PC-3 (cell line): ENCODE measurements at regions of chr12 and their contacts with region 1.

Region 1: GRCh38 chr12:56189176-56189917 is at the start of gene SMARCC2:
- DNase-seq: peak; percentile 93
- ATAC-seq: peak; percentile 86
- H3K4me3 ChIP-seq: peak within 1 kb of the TSS; percentile 94
- H3K27ac ChIP-seq: peak within 1 kb of the TSS; percentile 41
- H3K4me1 ChIP-seq: peaks cover 21% of the 10 kb centered on the region
- H3K27me3 ChIP-seq: no peaks in the 10 kb centered on the region
- CTCF ChIP-seq: peak; percentile 65
- total RNA-seq, gene SMARCC2: 38.4 and 39.4 TPM in 2 replicates

Region 2: DNA sequence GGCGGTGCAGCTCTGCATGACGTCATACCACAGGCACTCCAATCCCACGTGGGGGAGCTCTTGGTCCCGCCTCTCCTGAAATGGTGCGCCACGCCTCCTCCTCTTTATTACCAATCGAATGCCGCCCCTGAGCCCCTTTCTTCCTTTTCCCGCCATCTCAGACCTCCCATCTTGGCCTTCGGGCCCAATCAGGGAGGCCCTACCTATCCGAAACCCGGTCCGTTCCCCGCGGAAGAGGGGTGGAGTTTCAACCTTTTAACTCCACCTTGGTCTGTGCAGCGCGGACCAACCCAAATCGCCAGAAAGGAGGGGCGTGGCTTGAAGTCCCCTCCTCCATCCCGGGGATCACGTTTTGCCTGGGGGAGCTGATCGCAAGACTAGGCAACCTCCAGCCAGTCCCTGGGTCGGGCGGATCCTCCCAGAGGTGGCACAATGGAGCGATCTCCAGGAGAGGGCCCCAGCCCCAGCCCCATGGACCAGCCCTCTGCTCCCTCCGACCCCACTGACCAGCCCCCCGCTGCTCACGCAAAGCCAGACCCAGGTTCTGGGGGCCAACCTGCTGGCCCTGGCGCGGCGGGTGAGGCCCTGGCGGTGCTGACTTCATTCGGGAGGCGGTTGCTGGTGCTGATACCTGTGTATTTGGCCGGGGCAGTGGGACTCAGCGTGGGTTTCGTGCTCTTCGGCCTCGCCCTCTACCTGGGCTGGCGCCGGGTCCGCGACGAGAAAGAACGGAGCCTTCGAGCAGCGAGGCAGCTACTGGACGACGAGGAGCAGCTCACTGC is 61.3 kb before region 1 on chr12 and contains the start of gene ESYT1:
- CTCF ChIA-PET with region 1: interaction called, 17 read pairs
- POLR2A ChIA-PET with region 1: interaction called, 4 read pairs
- intact Hi-C with region 1: loop called (anchors 2 kb)
- DNase-seq: peak; percentile 100
- ATAC-seq: peak; percentile 90
- H3K4me3 ChIP-seq: peak within 1 kb of the TSS; percentile 96
- H3K27ac ChIP-seq: peak within 1 kb of the TSS; percentile 39; the same call in 1 of the 2 replicates
- H3K4me1 ChIP-seq: peaks cover 33% of the 10 kb centered on the region
- H3K27me3 ChIP-seq: no peaks in the 10 kb centered on the region
- CTCF ChIP-seq: no peak
- total RNA-seq, gene ESYT1: 120 and 176 TPM in 2 replicates

Region 3: DNA sequence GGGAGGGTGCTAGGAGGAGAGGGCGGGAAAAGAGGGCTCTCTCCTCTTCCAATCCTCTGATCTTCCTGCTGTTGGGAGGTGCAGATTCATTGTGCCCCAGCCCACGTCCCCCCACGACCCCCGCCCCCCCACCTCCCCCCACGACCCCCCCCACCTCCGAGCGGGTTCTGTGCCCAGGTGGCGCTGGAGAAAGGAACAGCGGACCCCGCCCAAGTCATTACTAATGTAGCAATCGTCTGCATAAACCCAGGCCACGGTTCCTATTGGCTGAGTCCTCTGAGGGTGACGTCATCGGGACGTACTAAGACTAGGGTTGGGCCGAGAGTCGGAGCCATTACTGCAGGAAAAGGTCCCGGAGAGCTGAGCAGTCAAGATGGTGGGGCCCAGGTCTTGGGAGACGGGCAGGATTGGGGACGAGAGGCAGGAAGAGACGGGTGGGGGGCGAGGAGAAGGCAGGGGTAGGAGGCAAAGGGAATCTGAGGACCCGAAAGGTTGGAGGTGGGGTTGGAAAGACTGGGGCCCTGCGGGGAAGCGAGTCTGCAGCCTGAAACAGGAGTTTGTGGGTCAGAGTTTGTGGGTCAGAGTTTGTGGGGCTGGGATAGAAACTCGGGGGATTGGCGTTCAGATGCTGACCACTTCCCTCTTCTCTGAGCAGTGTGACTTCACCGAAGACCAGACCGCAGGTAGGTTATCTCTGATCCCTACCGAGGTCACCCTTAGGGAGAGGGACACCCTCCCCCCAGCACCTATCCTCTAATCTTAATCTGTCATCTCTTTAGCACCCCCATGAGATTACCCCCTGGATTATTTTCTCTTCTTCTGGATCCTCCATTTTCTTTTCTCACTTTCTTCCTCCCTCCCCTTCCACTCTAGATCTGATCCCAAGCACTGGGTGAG is 31.1 kb before region 1 on chr12 and contains the start of gene MYL6:
- CTCF ChIA-PET with region 1: interaction called, 3 read pairs
- POLR2A ChIA-PET with region 1: interaction called, 6 read pairs
- intact Hi-C with region 1: loop called (anchors 2 kb)
- DNase-seq: peak; percentile 99
- ATAC-seq: peak; percentile 76
- H3K4me3 ChIP-seq: peak within 1 kb of the TSS; percentile 76
- H3K27ac ChIP-seq: peak within 1 kb of the TSS; percentile 73
- H3K4me1 ChIP-seq: peaks cover 28% of the 10 kb centered on the region
- H3K27me3 ChIP-seq: no peaks in the 10 kb centered on the region
- CTCF ChIP-seq: no peak
- total RNA-seq, gene MYL6: 1,385 and 1,597 TPM in 2 replicates

Region 4: DNA sequence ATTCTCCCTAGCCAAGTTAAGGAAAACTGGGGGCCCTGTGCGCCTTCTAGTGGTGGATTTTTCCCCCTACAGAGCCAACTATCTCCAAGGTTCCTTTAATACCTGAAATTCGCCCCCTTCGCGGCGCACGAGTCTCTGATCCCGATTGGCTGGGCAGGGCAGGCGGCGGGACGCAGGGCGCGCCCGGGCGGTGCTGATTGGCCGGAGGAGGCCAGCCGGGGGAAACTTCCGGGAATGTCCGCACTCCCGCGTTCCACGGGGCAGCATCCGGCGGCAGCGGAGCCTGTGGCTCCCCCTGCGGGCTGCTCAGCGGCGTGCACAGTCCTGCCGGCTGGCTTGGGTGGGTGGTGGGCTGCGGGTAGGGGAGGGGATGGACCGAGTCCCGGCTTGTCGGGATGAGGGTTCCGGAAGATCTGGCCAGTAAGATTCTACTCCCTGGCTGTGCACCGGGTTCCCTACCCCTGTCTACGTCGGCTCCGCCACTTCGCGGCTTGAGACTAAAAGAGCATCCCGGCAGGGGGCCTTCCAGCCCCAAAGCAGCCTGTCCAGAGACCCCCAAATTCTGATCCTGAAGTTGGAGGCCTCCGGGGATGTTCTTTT is 34.9 kb after region 1 on chr12 and contains the start of gene NABP2:
- CTCF ChIA-PET with region 1: interaction called, 9 read pairs
- POLR2A ChIA-PET with region 1: interaction called, 18 read pairs
- intact Hi-C with region 1: loop called (anchors 1 kb)
- DNase-seq: peak; percentile 99
- ATAC-seq: peak; percentile 81
- H3K4me3 ChIP-seq: peak within 1 kb of the TSS; percentile 88
- H3K27ac ChIP-seq: peak within 1 kb of the TSS; percentile 21; the same call in 1 of the 2 replicates
- H3K4me1 ChIP-seq: peaks cover 22% of the 10 kb centered on the region
- H3K27me3 ChIP-seq: no peaks in the 10 kb centered on the region
- CTCF ChIP-seq: peak; percentile 94
- total RNA-seq, gene NABP2: 91.6 and 98.6 TPM in 2 replicates

Region 5: GRCh38 chr12:56468216-56469006 is 279.1 kb after region 1 on chr12 and contains the start of gene SPRYD4:
- CTCF ChIA-PET with region 1: no interaction called
- POLR2A ChIA-PET with region 1: no interaction called
- intact Hi-C with region 1: loop called (anchors 10 kb)
- DNase-seq: peak; percentile 94
- ATAC-seq: peak; percentile 87
- H3K4me3 ChIP-seq: peak within 1 kb of the TSS; percentile 97
- H3K27ac ChIP-seq: peak within 1 kb of the TSS; percentile 76
- H3K4me1 ChIP-seq: peaks cover 17% of the 10 kb centered on the region
- H3K27me3 ChIP-seq: no peaks in the 10 kb centered on the region
- CTCF ChIP-seq: peak; percentile 64
- total RNA-seq, gene SPRYD4: 3.4 and 3.7 TPM in 2 replicates